ENCODE measurements at regions of chr9 and their contacts with region 1.

Region 1: DNA sequence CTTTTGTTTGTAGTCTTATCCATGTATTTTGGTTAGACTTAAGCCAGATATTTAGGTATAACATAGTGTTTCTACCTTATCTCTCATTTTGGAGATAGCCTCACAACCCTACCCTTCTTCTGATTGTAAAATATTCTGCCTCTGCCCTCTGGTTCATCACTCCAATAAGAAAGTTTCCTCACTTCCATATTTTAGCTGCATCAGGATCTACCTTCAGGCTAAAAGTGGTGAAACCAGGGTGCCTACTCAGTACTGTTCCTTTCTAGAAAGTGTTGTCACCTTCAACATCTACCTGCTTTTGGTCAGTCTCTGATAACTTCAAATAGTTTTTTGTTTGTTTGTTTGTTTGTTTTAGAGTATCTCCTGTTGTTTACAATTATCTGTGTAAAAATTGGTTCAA is 294.6 kb downstream of the ANXA1 start:
- DNase-seq: no peak
- ATAC-seq: peak in 3 of 8 donors; percentile 22 to 56 (median 45)
- H3K4me3 ChIP-seq: peak overlapping the region; percentile 25 to 50 (median 40)
- H3K27ac ChIP-seq: peak overlapping the region in 9 of 10 donors; percentile 9 to 75 (median 68)
- H3K4me1 ChIP-seq: peaks cover 0 to 5% (median 0%) of the 10 kb centered on the region in 9 donors
- H3K27me3 ChIP-seq: no peaks in the 10 kb centered on the region
- CTCF ChIP-seq: no peak

Region 2: GRCh38 chr9:73497796-73498195 is 51.5 kb after region 1 on chr9:
- intact Hi-C with region 1: loop called in 1 of 10 experiments (anchors 5 kb)
- DNase-seq: no peak
- ATAC-seq: peak in 7 of 8 donors; percentile 33 to 91 (median 57)
- H3K4me3 ChIP-seq: no peak overlapping the region
- H3K27ac ChIP-seq: peak overlapping the region in 3 of 10 donors; percentile 26 to 48 (median 36)
- H3K4me1 ChIP-seq: peaks cover 0 to 17% (median 0%) of the 10 kb centered on the region in 9 donors
- H3K27me3 ChIP-seq: no peaks in the 10 kb centered on the region
- CTCF ChIP-seq: no peak

Region 3: DNA sequence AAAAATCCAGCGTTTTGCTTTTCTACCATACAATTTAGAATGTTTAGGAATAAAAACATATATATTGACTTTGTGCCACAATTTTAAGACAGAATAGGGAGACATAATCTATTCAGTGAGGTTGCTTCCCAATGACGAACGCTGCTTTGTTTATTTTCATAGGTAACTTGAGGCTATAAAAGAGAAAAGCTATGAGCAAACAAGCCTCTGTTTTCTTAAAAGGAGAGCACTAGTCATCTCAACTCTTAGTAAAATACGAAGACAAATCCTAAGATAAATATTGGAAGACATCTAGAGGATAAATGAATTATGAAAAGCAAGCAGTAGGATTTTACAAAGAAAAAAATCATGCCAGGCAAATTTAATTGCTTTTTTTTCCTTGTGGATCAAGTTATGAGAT is 68.9 kb after region 1 on chr9:
- intact Hi-C with region 1: loop called in 1 of 10 experiments (anchors 5 kb)
- DNase-seq: no peak
- ATAC-seq: no peak
- H3K4me3 ChIP-seq: no peak overlapping the region
- H3K27ac ChIP-seq: no peak overlapping the region
- H3K4me1 ChIP-seq: no peaks in the 10 kb centered on the region
- H3K27me3 ChIP-seq: no peaks in the 10 kb centered on the region
- CTCF ChIP-seq: no peak